CD8-positive, alpha-beta memory T cell (primary cell): ENCODE measurements at regions of chr12 and their contacts with region 1.

Region 1: GRCh38 chr12:53220801-53221202 is 11.2 kb downstream of the RARG start:
- DNase-seq: peak; percentile 67 to 86 (median 75)
- H3K4me3 ChIP-seq: peak overlapping the region; percentile 96
- H3K4me3 Mint-ChIP-seq: peak overlapping the region; percentile 93 to 99 (median 96)
- H3K27ac ChIP-seq: peak overlapping the region; percentile 87
- H3K27ac Mint-ChIP-seq: peak overlapping the region; percentile 90 to 98 (median 96)
- H3K4me1 ChIP-seq: peaks cover 72% of the 10 kb centered on the region
- H3K4me1 Mint-ChIP-seq: peaks cover 76 to 85% (median 85%) of the 10 kb centered on the region in 3 donors
- H3K27me3 ChIP-seq: no peaks in the 10 kb centered on the region
- H3K27me3 Mint-ChIP-seq: no peaks in the 10 kb centered on the region

Region 2: DNA sequence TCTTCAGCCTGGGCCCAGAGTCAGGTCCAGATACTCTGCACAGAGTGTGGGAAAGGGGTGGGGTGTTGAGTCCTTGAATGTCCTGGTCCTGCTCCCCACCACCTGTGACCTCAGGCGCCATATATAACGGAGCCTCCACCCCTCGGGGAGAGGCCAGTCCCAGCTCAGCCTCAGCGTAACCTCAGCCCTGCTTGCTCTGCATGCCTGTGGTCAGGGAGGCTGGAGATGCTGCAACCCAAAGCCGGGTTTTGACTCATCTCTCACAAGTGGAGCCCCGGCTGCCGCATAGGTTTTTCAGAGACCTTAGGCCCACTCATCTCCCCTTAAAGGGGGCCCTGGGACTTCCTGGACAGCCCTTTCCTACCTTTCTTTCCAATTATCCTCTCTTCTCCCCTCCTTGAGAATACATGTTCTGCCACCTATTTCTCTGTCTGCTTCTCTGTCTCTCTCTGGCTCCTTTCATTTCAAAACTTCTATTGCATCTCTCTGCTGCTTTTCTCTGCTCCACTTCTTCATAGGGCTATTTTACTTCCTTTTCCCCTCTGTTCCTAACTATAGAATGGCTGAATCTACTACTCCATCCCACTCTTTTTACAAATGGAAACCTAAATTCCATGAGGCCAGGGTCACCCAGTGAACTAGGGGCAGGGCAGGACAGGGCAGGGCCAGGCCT is 14.9 kb before region 1 on chr12:
- CTCF ChIA-PET with region 1: interaction called, 8 read pairs
- POLR2A ChIA-PET with region 1: interaction called, 25 read pairs
- DNase-seq: peak in 3 of 5 donors; percentile 32 to 80 (median 42)
- H3K4me3 ChIP-seq: peak overlapping the region; percentile 93
- H3K4me3 Mint-ChIP-seq: peak overlapping the region; percentile 83 to 98 (median 89)
- H3K27ac ChIP-seq: peak overlapping the region; percentile 55
- H3K27ac Mint-ChIP-seq: peak overlapping the region; percentile 85 to 99 (median 90)
- H3K4me1 ChIP-seq: peaks cover 81% of the 10 kb centered on the region
- H3K4me1 Mint-ChIP-seq: peaks cover 70 to 94% (median 84%) of the 10 kb centered on the region in 3 donors
- H3K27me3 ChIP-seq: no peaks in the 10 kb centered on the region
- H3K27me3 Mint-ChIP-seq: peaks cover 0 to 1% of the 10 kb centered on the region in 2 donors

Region 3: GRCh38 chr12:53231826-53232645 is 11.2 kb after region 1 on chr12 and contains the start of gene RARG:
- CTCF ChIA-PET with region 1: interaction called, 98 read pairs
- POLR2A ChIA-PET with region 1: interaction called, 10 read pairs
- DNase-seq: peak; percentile 53 to 79 (median 68)
- H3K4me3 ChIP-seq: peak within 1 kb of the TSS; percentile 76
- H3K4me3 Mint-ChIP-seq: peak within 1 kb of the TSS; percentile 81 to 95 (median 91)
- H3K27ac ChIP-seq: peak within 1 kb of the TSS; percentile 12
- H3K27ac Mint-ChIP-seq: peak within 1 kb of the TSS; percentile 85 to 100 (median 96)
- H3K4me1 ChIP-seq: peaks cover 57% of the 10 kb centered on the region
- H3K4me1 Mint-ChIP-seq: peaks cover 56 to 85% (median 59%) of the 10 kb centered on the region in 3 donors
- H3K27me3 ChIP-seq: no peaks in the 10 kb centered on the region
- H3K27me3 Mint-ChIP-seq: peaks cover 0 to 1% of the 10 kb centered on the region in 2 donors
- total RNA-seq, gene RARG: 67.0 to 68.4 TPM

Region 4: GRCh38 chr12:53251477-53252348 is 30.9 kb after region 1 on chr12:
- CTCF ChIA-PET with region 1: interaction called, 166 read pairs
- POLR2A ChIA-PET with region 1: interaction called, 8 read pairs
- DNase-seq: peak; percentile 68 to 84 (median 69)
- H3K4me3 ChIP-seq: peak overlapping the region; percentile 83
- H3K4me3 Mint-ChIP-seq: peak overlapping the region; percentile 97 to 99 (median 99)
- H3K27ac ChIP-seq: peak overlapping the region; percentile 73
- H3K27ac Mint-ChIP-seq: peak overlapping the region; percentile 90 to 100 (median 98)
- H3K4me1 ChIP-seq: peaks cover 41% of the 10 kb centered on the region
- H3K4me1 Mint-ChIP-seq: peaks cover 32 to 46% (median 46%) of the 10 kb centered on the region in 3 donors
- H3K27me3 ChIP-seq: no peaks in the 10 kb centered on the region
- H3K27me3 Mint-ChIP-seq: peaks cover 0 to 1% of the 10 kb centered on the region in 2 donors

Region 5: GRCh38 chr12:53267999-53268647 is 47.3 kb after region 1 on chr12 and contains the start of gene ESPL1:
- CTCF ChIA-PET with region 1: interaction called, 165 read pairs
- POLR2A ChIA-PET with region 1: interaction called, 21 read pairs
- DNase-seq: peak; percentile 75 to 88 (median 84)
- H3K4me3 ChIP-seq: peak within 1 kb of the TSS; percentile 83
- H3K4me3 Mint-ChIP-seq: peak within 1 kb of the TSS; percentile 88 to 99 (median 94)
- H3K27ac ChIP-seq: peak within 1 kb of the TSS; percentile 67
- H3K27ac Mint-ChIP-seq: peak within 1 kb of the TSS; percentile 52 to 99 (median 90)
- H3K4me1 ChIP-seq: peaks cover 13% of the 10 kb centered on the region
- H3K4me1 Mint-ChIP-seq: peaks cover 16 to 21% (median 20%) of the 10 kb centered on the region in 3 donors
- H3K27me3 ChIP-seq: no peaks in the 10 kb centered on the region
- H3K27me3 Mint-ChIP-seq: no peaks in the 10 kb centered on the region
- total RNA-seq, gene ESPL1: 58.4 to 63.4 TPM

Region 6: GRCh38 chr12:53287741-53288216 is 67.0 kb after region 1 on chr12:
- CTCF ChIA-PET with region 1: interaction called, 13 read pairs
- POLR2A ChIA-PET with region 1: no interaction called
- DNase-seq: peak; percentile 57 to 84 (median 63)
- H3K4me3 ChIP-seq: no peak overlapping the region
- H3K4me3 Mint-ChIP-seq: no peak overlapping the region
- H3K27ac ChIP-seq: no peak overlapping the region
- H3K27ac Mint-ChIP-seq: peak overlapping the region in 4 of 8 donors; percentile 37 to 78 (median 70)
- H3K4me1 ChIP-seq: no peaks in the 10 kb centered on the region
- H3K4me1 Mint-ChIP-seq: peaks cover 4 to 5% (median 5%) of the 10 kb centered on the region in 3 donors
- H3K27me3 ChIP-seq: no peaks in the 10 kb centered on the region
- H3K27me3 Mint-ChIP-seq: no peaks in the 10 kb centered on the region